ENCODE measurements at regions of chr10 and their contacts with region 1.

Region 1: GRCh38 chr10:69800109-69800508 is 1.6 kb upstream of the COL13A1 start:
- DNase-seq: peak in 2 of 5 donors; percentile 44 to 56
- ATAC-seq: peak in 2 of 4 donors; percentile 43 to 58
- H3K4me3 ChIP-seq: no peak overlapping the region
- H3K27ac ChIP-seq: no peak overlapping the region
- H3K4me1 ChIP-seq: peaks cover 0 to 27% (median 11%) of the 10 kb centered on the region in 12 donors
- H3K27me3 ChIP-seq: peaks cover 0 to 35% (median 4%) of the 10 kb centered on the region in 9 donors
- CTCF ChIP-seq: peak; percentile 42 to 74 (median 60)
- POLR2A ChIP-seq: no peak

Region 2: DNA sequence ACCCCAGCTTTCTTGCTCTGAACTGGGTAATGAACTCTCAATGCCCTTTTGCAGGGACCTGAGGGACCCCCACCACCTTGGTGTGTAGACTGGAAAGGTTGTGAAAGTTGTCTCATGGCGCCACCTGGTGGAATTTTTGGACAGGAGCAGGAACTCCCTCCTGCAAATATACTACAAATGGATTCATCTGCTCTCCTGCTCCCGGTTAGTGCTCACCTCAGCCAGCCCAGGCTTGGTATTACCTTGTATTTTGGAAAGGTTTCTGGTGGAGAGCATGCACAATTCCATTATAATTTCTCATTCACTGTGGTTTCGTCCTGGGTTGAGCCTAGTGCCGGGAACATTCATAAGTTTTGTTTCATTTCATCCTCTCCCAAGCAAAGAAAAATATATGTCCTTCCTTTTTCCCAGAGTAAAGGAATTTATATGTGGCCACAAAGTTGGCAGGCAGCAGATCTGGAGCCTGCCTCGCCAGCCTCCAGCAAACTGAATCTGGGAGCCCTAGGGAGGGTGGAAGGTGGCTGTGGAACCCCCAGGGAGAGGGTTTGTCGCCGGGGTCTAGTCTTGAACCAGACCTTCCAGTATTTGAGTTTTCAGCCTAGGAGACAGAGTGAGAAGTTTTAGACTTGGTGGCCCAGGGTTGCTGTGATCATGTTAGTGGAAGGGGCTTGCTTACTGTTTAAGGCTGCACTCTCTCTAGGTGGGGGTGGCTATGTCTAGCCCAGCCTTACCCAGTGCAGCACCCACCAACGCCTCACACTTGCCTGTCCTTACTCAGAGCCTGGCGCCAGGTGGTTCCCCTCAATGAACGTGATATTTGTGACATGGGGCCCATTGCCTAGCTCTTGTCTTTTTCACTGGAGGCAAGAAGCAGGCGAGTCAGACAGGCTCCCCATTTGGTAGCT is 160.6 kb before region 1 on chr10:
- intact Hi-C with region 1: loop called in 7 of 10 experiments (anchors 2 to 10 kb)
- DNase-seq: peak in 4 of 5 donors; percentile 46 to 56 (median 48)
- ATAC-seq: peak in 2 of 4 donors; percentile 60 to 68
- H3K4me3 ChIP-seq: no peak overlapping the region
- H3K27ac ChIP-seq: no peak overlapping the region
- H3K4me1 ChIP-seq: no peaks in the 10 kb centered on the region
- H3K27me3 ChIP-seq: peaks cover 0 to 13% (median 4%) of the 10 kb centered on the region in 9 donors
- CTCF ChIP-seq: peak; percentile 73 to 87 (median 85)
- POLR2A ChIP-seq: no peak

Region 3: GRCh38 chr10:69644658-69645295 is 155.3 kb before region 1 on chr10:
- intact Hi-C with region 1: loop called in 7 of 10 experiments (anchors 2 to 10 kb)
- DNase-seq: peak in 4 of 5 donors; percentile 32 to 56 (median 49)
- ATAC-seq: peak in 3 of 4 donors; percentile 51 to 72 (median 56)
- H3K4me3 ChIP-seq: no peak overlapping the region
- H3K27ac ChIP-seq: no peak overlapping the region
- H3K4me1 ChIP-seq: no peaks in the 10 kb centered on the region
- H3K27me3 ChIP-seq: peaks cover 0 to 17% (median 4%) of the 10 kb centered on the region in 9 donors
- CTCF ChIP-seq: peak; percentile 67 to 89 (median 78)
- POLR2A ChIP-seq: no peak

Region 4: DNA sequence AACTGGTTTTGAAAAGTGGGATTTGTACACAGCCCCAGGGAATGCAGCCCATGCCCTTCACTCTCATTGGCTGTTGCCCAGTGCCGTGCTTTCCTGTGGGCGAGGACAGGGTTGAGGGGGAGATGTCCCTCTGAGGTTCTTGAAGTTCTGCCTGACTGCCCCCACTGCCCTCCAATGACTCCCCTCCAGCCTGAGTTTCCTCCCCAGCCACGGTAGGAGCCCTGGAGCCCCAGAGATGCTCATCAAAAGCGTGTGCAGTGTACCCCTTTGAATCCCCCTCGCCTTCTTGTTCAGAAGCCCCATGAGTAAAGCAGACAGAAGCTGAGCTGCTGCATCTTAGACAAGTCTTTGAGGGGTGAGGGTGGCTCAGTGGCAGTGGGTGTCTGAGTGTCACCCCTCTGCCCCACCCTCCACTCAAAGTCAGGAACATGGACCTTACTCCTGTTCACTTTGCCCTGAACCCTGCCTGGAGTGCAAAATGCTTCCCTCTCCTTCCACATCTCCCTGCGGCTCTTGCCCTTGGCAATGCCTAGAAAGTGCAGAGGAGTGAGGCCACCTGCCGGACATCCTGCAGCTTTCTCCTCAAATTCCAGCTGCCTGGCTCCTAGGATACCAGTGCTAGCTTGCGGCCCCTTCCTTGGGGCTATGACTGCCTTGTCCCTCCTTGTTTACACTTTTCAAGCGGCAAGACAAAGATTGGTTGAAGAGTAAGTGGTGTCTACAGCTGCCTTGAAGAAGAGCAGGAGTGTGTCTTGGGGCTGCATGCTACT is 150.1 kb before region 1 on chr10:
- intact Hi-C with region 1: loop called in 6 of 10 experiments (anchors 2 to 10 kb)
- DNase-seq: no peak
- ATAC-seq: no peak
- H3K4me3 ChIP-seq: no peak overlapping the region
- H3K27ac ChIP-seq: no peak overlapping the region
- H3K4me1 ChIP-seq: no peaks in the 10 kb centered on the region
- H3K27me3 ChIP-seq: peaks cover 0 to under 1% (median 0%) of the 10 kb centered on the region in 9 donors
- CTCF ChIP-seq: no peak
- POLR2A ChIP-seq: no peak

Region 5: GRCh38 chr10:69696073-69696731 is 103.9 kb before region 1 on chr10:
- intact Hi-C with region 1: loop called in 4 of 10 experiments (anchors 2 to 5 kb)
- DNase-seq: no peak
- ATAC-seq: peak; percentile 37 to 75 (median 56)
- H3K4me3 ChIP-seq: no peak overlapping the region
- H3K27ac ChIP-seq: no peak overlapping the region
- H3K4me1 ChIP-seq: peaks cover 0 to 3% (median 0%) of the 10 kb centered on the region in 12 donors
- H3K27me3 ChIP-seq: peaks cover 0 to 5% (median 0%) of the 10 kb centered on the region in 9 donors
- CTCF ChIP-seq: peak; percentile 36 to 77 (median 62)
- POLR2A ChIP-seq: no peak

Region 6: DNA sequence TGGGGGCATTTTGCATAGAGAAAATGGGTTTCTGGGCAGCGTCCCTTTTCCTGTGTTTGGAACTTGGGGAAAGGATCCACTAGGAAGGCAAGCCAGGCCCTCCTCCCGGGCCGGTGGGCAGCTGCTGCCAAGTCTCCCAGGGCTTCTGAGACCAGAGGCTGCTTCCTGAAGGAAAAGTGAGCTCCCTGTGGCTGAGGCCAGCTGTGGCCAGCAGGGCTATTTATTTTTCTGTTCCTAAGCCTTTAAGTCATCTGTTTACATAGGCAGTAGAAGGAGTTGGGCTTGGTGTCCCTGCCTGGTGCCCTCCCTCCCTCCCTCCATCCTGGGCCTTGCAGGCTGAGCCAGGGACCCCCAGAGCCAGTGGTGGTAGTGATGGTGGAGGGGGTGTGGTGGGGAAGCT is 68.9 kb before region 1 on chr10:
- intact Hi-C with region 1: loop called in 7 of 10 experiments (anchors 2 to 5 kb)
- DNase-seq: peak in 1 of 5 donors; percentile 66
- ATAC-seq: peak in 3 of 4 donors; percentile 3 to 15 (median 14)
- H3K4me3 ChIP-seq: no peak overlapping the region
- H3K27ac ChIP-seq: peak overlapping the region in 10 of 12 donors; percentile 78 to 92 (median 83)
- H3K4me1 ChIP-seq: peaks cover 0 to 72% (median 44%) of the 10 kb centered on the region in 12 donors
- H3K27me3 ChIP-seq: no peaks in the 10 kb centered on the region
- CTCF ChIP-seq: no peak
- POLR2A ChIP-seq: no peak

Measured in heart left ventricle (tissue), 16 donors.